PC-9 (cell line): ENCODE measurements at regions of chr3 and their contacts with region 1.

Region 1: DNA sequence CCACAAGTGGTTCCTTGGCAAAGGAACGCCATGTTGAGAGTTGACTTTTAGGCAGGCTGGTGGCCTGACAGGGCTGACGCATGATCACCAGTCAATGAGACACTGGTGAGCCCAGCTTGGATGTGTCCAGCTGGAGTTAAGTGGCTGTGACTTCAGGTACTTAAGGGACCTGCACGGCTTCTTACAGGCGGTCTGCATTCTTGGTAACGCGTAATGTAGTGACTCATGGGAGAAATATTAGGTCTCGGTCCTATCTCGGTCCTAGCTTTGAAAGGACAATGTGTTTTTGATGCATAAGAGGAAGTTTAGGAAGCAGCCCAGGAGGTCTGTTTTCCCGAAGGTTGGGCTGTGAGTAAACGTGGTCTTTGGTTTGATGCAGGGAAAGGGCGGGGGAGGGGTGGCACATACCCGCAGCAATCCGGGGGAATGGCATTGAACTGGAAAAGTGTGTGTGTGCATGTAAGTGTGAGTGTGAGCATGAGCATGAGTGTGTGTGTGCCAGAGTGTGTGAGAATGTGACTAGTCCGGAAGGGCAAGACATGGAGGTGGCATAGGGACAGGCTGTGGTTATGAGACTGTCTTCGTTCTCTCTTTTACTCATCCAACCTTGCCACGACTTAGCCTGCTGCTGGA is 55.3 kb downstream of the FAM43A start:
- DNase-seq: peak; percentile 86 to 100
- H3K4me3 ChIP-seq: peak overlapping the region; percentile 30; the same call in 1 of the 2 replicates
- H3K27ac ChIP-seq: peak overlapping the region; percentile 80
- H3K4me1 ChIP-seq: peaks cover 42% of the 10 kb centered on the region
- H3K27me3 ChIP-seq: no peaks in the 10 kb centered on the region
- CTCF ChIP-seq: no peak

Region 2: DNA sequence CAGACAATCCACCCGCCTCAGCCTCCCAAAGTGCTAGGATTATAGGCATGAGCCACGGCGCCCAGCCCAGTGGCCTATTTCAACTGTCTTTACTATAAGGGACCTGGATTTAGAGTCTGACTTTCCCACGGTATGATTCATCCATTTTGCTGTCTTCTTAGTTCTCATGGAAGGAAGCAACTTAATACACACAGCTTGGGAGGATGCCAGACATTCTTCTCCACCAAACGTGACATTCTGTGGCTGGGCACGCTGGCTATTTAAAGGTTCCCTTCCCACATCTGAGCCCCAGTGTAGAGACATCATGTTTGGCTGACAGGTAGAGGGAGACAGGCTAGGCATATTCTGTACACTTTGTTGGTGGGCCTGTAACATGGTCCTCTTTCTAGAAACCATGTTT is 29.1 kb before region 1 on chr3:
- CTCF ChIA-PET with region 1: interaction called, 5 read pairs
- POLR2A ChIA-PET with region 1: interaction called, 9 read pairs
- intact Hi-C with region 1: loop called (anchors 1 kb)
- DNase-seq: peak; percentile 89 to 99
- H3K4me3 ChIP-seq: no peak overlapping the region
- H3K27ac ChIP-seq: peak overlapping the region; percentile 54
- H3K4me1 ChIP-seq: peaks cover 47% of the 10 kb centered on the region
- H3K27me3 ChIP-seq: no peaks in the 10 kb centered on the region
- CTCF ChIP-seq: no peak

Region 3: GRCh38 chr3:194769020-194769643 is 28.2 kb after region 1 on chr3:
- CTCF ChIA-PET with region 1: no interaction called
- POLR2A ChIA-PET with region 1: no interaction called
- intact Hi-C with region 1: loop called (anchors 2 kb)
- DNase-seq: peak; percentile 96 to 97
- H3K4me3 ChIP-seq: peak overlapping the region; percentile 50; the same call in 1 of the 2 replicates
- H3K27ac ChIP-seq: no peak overlapping the region
- H3K4me1 ChIP-seq: peaks cover 26% of the 10 kb centered on the region
- H3K27me3 ChIP-seq: no peaks in the 10 kb centered on the region
- CTCF ChIP-seq: 0 out of 2 replicates have a peak, but pooled peaks have one; percentile 28

Region 4: GRCh38 chr3:194861375-194861774 is 120.4 kb after region 1 on chr3:
- CTCF ChIA-PET with region 1: no interaction called
- POLR2A ChIA-PET with region 1: interaction called, 19 read pairs
- intact Hi-C with region 1: no loop called
- DNase-seq: no peak
- H3K4me3 ChIP-seq: no peak overlapping the region
- H3K27ac ChIP-seq: no peak overlapping the region
- H3K4me1 ChIP-seq: no peaks in the 10 kb centered on the region
- H3K27me3 ChIP-seq: no peaks in the 10 kb centered on the region
- CTCF ChIP-seq: no peak

Region 5: GRCh38 chr3:195403852-195404408 is 663.0 kb after region 1 on chr3:
- CTCF ChIA-PET with region 1: no interaction called
- POLR2A ChIA-PET with region 1: interaction called, 45 read pairs
- intact Hi-C with region 1: no loop called
- DNase-seq: no peak
- H3K4me3 ChIP-seq: no peak overlapping the region
- H3K27ac ChIP-seq: no peak overlapping the region
- H3K4me1 ChIP-seq: no peaks in the 10 kb centered on the region
- H3K27me3 ChIP-seq: no peaks in the 10 kb centered on the region
- CTCF ChIP-seq: no peak